ENCODE measurements at regions of chr13 and their contacts with region 1.

Region 1: DNA sequence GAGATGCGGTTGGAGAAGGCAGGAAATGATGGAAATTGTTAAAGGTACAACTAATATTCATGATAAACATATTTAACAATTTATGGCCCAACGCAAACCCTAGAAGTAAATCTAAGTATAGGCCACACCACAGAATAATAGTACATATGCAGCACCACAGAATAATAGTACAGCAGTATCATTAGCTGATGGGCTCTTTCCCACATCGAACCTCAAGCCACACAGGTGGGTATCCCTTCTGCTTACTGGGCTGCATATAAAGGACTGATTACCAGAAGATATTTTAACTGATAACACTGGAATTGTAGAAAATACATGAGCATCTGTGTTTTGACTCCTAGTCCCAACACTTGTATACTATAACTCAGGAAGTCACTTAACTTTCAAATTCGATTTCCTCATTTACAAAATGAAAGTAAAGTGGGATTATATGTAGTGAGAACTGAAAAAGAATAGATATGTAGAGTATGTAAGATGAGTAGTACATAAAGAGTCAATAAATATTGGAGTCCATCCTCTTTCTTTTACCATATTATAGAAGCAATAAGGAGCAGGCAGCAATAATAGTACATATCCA is 91.5 kb downstream of the TSC22D1 start:
- DNase-seq: no peak
- H3K4me3 ChIP-seq: no peak overlapping the region
- CTCF ChIP-seq: no peak
- POLR2A ChIP-seq: no peak

Region 2: DNA sequence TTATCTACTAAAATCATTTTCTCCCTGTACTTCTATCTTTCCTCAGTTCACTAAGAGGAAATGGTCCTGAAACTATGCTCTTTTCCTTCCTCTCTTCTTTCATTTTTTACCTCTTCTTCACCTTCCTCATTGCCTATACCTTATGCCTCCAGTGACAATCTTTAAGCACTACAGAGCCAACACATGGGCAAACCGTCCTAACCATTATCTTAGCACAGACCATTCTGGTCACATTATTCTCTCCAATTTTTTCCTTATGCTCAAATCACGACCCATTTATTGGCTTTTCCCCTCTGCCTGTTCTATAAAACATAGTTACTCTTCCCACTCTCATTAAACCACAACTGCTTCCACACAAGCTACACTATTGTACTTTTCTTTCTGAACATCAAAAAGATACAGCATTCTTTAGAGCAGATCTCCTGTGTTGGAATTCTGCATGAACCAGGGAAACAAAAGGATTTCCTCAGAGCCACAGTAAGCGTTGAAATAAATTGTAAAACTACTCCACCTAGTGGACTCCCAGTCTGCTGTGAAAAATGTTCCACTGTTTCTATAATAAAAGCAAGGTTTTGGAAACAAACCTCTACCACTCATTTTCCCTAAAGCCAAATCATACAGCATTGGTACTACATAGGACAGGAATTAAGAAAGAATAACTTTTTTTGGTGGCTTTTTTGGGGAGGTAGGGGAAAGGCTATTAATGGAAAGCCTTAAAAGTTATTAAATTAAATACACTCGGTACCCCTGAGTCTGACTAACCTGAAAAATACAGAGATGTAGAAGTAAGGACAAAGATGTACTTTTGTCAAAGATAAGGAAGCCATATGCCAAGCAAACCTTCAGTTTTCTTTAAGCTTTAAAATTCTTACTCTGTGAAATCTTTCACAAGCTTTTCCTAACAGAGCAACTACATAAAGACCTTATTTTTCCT is 485.2 kb after region 1 on chr13:
- intact Hi-C with region 1: loop called (anchors 10 kb)
- DNase-seq: no peak
- H3K4me3 ChIP-seq: no peak overlapping the region
- CTCF ChIP-seq: no peak
- POLR2A ChIP-seq: no peak

Measured in lower leg skin (tissue), 4 donors.